ENCODE measurements at regions of chr2 and their contacts with region 1.

Region 1: DNA sequence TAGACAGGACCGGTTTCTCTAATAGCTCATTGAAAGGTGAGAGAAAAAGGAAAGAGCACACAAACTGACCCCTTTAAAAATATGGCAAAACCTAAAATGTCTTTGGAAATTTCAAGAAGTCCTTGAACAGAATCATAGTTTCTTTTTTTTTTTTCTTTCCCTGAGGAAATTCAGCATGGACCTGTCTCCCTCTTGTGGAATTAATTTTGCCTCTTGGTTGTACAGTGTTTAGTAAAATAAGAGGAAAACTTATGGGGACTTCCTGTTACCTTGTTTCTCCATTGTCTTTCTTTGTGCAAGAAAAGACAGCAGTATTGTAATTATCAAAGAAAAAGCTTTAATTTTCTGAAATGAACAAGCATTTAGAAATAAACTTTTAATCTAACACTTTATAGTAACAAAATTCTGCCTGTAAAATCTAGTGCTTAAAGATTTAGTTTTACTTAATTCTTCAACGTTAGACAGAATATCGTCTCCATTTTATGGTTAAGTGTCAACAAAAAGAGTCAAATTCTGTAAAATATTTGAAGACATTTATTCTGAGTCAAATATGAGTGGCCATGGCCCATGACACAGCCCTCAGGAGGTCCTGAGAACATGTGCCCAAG is 176.3 kb upstream of the NABP1 start:
- DNase-seq: peak; percentile 48
- H3K4me3 ChIP-seq: no peak overlapping the region
- H3K27ac ChIP-seq: peak overlapping the region in 1 of 2 experiments; percentile 97; a peak in 2 of 4 replicates
- H3K4me1 ChIP-seq: peaks cover 6 to 32% of the 10 kb centered on the region in 2 experiments; a peak in 2 of 4 replicates
- H3K27me3 ChIP-seq: no peaks in the 10 kb centered on the region
- CTCF ChIP-seq: peak; percentile 86
- EP300 ChIP-seq: no peak
- RAD21 ChIP-seq: peak; percentile 92

Region 2: DNA sequence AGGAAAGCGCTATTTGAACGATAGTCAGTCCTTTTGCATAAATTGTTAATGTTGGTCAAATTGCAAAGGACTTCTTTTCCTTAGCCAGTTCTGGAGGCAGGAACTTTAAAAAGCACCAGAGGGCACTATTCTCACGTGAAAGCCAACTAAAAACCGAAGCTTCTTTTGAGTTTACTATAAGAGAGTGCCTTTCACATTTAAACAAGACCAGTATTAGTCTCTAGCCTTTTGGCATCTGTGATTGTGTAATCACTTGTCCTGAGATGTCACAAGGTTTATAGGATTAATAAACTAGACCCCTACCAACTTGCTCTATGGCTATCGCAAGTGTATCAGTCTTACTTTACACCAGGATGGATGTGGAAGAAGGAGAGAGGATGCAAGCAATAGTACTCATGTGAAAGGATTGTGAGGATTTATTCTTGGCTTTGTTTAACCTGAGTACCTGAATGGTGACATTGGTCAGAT is 336.5 kb before region 1 on chr2:
- CTCF ChIA-PET with region 1: interaction called, 47 read pairs
- POLR2A ChIA-PET with region 1: no interaction called
- DNase-seq: peak; percentile 44
- H3K4me3 ChIP-seq: peak overlapping the region in 1 of 2 experiments; percentile 22; a peak in 1 of 4 replicates
- H3K27ac ChIP-seq: peak overlapping the region in 1 of 2 experiments; percentile 50; a peak in 1 of 4 replicates
- H3K4me1 ChIP-seq: peaks cover 8 to 20% of the 10 kb centered on the region in 2 experiments
- H3K27me3 ChIP-seq: no peaks in the 10 kb centered on the region
- CTCF ChIP-seq: peak; percentile 69
- EP300 ChIP-seq: no peak
- RAD21 ChIP-seq: peak; percentile 91

Region 3: DNA sequence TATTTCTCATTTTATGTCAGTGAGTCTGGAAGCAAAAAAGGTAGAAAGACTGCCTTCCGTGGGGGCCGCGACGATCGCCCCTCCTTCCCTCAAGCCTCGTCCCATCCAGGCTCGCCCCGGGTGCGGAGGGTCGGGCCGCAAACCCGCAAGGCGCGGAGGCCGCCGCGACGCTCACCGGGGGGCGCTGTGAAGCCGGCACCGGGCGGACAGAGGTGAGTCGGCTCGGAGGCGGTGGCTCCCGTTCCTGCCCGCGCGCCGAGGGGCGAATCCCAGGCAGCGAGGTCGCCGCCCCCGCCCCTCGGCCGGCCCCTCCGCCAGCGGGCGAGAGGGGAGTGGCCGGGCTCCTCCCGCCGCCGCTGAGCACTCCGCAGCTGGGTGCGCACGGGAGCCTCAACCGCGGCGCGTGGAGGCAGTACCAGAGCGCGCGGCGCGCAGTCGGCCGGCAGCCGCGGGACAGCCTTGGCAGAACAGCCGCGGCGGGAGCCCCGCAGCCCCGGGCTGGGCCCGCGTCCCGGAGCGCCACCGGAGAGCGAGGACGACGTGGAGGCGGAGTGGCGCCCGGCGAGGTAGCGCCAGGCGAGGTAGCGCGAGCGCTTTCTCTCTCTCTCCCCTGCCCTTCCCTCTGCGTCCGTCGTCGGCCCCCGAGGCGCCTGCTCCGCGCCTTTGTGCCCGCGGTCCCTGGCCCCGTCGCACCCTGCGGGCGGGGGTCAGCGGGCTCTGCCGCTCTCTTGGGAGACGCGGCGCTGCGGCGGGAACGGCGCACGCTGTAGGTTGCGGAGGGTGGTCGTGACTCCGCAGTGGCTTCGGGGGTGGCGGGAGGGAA is 256.4 kb before region 1 on chr2 and contains the start of gene MYO1B:
- CTCF ChIA-PET with region 1: interaction called, 45 read pairs
- POLR2A ChIA-PET with region 1: interaction called, 27 read pairs
- DNase-seq: peak; percentile 94
- H3K4me3 ChIP-seq: peak within 1 kb of the TSS; percentile 74 to 93
- H3K27ac ChIP-seq: peak within 1 kb of the TSS; percentile 90 to 99
- H3K4me1 ChIP-seq: peaks cover 22 to 30% of the 10 kb centered on the region in 2 experiments; a peak in 3 of 4 replicates
- H3K27me3 ChIP-seq: no peaks in the 10 kb centered on the region
- CTCF ChIP-seq: peak; percentile 67
- EP300 ChIP-seq: peak in 1 of 2 experiments; percentile 26; a peak in 1 of 4 replicates
- RAD21 ChIP-seq: peak; percentile 83
- polyA plus RNA-seq, gene MYO1B: 20.2 and 26.5 TPM in 2 replicates

Region 4: DNA sequence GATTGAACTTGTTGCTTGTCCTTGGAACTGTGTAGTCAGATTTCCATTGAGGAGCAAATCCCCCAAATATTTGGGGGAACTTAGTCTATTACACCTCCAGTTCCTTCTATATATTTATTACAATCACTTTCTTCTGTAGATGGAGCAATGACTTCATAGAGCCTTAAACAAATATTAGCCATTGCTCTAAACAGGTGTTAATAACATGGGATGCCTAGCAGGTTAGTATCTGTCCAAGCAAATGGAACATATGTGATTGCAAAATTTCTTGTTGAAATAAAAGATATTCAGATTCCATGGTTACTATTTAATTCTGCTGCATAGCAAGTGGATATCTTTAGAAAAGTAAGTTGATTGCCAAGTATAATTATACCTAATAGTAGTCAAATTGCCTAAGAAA is 31.4 kb before region 1 on chr2:
- CTCF ChIA-PET with region 1: interaction called, 12 read pairs
- POLR2A ChIA-PET with region 1: no interaction called
- DNase-seq: no peak
- H3K4me3 ChIP-seq: no peak overlapping the region
- H3K27ac ChIP-seq: no peak overlapping the region
- H3K4me1 ChIP-seq: peaks cover 0 to 5% of the 10 kb centered on the region in 2 experiments; a peak in 2 of 4 replicates
- H3K27me3 ChIP-seq: no peaks in the 10 kb centered on the region; the same call in 1 of the 2 replicates
- CTCF ChIP-seq: no peak
- EP300 ChIP-seq: no peak
- RAD21 ChIP-seq: no peak

Region 5: GRCh38 chr2:191515551-191515950 is 13.9 kb after region 1 on chr2:
- CTCF ChIA-PET with region 1: interaction called, 52 read pairs
- POLR2A ChIA-PET with region 1: no interaction called
- DNase-seq: no peak
- H3K4me3 ChIP-seq: no peak overlapping the region
- H3K27ac ChIP-seq: no peak overlapping the region
- H3K4me1 ChIP-seq: peaks cover 0 to 3% of the 10 kb centered on the region in 2 experiments; a peak in 1 of 4 replicates
- H3K27me3 ChIP-seq: no peaks in the 10 kb centered on the region
- CTCF ChIP-seq: no peak
- EP300 ChIP-seq: no peak
- RAD21 ChIP-seq: no peak

Region 6: DNA sequence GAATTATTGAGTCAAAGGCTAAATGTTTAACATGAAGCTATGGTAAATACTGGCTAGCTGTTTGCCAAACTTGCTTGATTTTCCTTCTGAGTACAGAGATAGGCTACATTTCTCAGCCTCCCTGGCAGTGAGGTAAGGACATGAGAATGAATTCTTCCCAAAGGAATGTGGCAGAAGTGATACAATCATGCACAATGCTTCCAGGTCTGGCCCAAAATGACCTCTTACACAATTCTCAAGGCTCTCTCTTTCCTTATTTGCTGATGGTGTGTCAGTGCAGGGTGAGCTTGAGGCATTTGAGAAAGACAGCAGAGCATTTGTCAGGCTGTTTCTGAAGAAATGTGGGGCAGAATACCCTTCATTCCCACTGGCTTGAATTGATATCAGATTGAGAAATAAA is 80.7 kb after region 1 on chr2:
- CTCF ChIA-PET with region 1: no interaction called
- POLR2A ChIA-PET with region 1: no interaction called
- DNase-seq: no peak
- H3K4me3 ChIP-seq: no peak overlapping the region
- H3K27ac ChIP-seq: peak overlapping the region in 1 of 2 experiments; percentile 62; a peak in 2 of 4 replicates
- H3K4me1 ChIP-seq: no peaks in the 10 kb centered on the region; a peak in 1 of 4 replicates
- H3K27me3 ChIP-seq: no peaks in the 10 kb centered on the region
- CTCF ChIP-seq: no peak
- EP300 ChIP-seq: peak in 1 of 2 experiments; percentile 70; a peak in 1 of 4 replicates
- RAD21 ChIP-seq: no peak

Measured in SK-N-SH (cell line).